ENCODE measurements at regions of chr18 and their contacts with region 1.

Region 1: DNA sequence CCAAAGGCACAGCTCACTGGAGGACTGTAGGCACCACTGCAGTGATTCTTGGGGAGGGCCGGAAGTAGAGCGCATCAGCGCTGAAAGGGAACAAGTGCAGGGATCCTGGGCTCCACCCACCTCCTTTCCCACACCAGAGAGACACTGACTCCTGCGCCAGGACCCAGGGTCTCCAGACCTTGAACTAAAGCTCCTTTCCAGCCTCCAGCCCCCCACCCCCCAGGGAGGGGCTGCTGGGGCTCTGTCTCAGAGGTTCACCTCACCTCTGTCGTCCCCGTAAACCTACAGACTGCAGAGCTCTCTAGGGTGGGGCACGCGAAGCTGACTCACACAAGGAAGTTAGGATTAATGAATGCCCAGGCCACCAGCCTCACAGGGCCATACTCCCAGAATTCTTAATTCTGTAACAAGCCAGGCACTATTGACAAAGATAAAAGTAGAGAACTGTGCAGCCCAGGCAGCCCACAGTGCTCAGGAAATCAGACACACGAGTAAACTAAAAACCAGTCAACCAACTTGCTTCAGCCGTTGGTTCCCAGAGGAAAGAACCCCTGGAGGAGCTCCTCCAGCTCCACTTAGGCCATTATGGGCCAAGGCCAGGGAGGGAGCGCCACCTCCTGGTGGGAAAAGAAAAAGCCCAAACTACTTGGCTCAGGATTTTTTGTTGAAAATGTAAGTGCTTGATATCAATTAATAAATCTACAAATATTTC is 45.1 kb upstream of the ACAA2 start:
- DNase-seq: peak; percentile 75
- ATAC-seq: peak; percentile 85
- H3K4me3 ChIP-seq: no peak overlapping the region
- H3K27ac ChIP-seq: peak overlapping the region; percentile 67
- H3K4me1 ChIP-seq: peaks cover 7% of the 10 kb centered on the region
- H3K27me3 ChIP-seq: no peaks in the 10 kb centered on the region
- CTCF ChIP-seq: peak; percentile 94

Region 2: GRCh38 chr18:49510393-49511115 is 347.9 kb before region 1 on chr18:
- intact Hi-C with region 1: loop called (anchors 5 kb)
- DNase-seq: no peak
- ATAC-seq: peak; percentile 92
- H3K4me3 ChIP-seq: no peak overlapping the region
- H3K27ac ChIP-seq: no peak overlapping the region
- H3K4me1 ChIP-seq: no peaks in the 10 kb centered on the region
- H3K27me3 ChIP-seq: no peaks in the 10 kb centered on the region
- CTCF ChIP-seq: peak; percentile 83

Region 3: DNA sequence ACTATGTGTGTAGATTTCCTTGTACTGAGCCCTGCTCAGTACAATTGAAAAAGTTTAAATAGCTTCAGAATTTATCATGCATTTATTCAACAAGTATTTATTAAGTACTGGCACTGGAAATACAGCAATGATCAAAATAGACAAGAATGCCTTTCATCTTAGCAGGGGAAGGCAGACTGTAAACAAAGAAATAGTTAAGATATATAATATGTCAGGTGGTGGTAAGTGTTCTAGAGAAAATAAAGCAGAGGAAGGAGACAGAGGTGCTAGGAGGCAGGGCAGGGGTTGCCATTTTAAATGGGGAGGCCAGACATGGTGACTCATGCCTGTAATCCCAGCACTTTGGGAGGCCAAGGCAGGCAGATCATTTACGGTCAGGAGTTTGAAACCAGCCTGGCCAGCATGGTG is 310.2 kb before region 1 on chr18:
- intact Hi-C with region 1: no loop called
- DNase-seq: no peak
- ATAC-seq: no peak
- H3K4me3 ChIP-seq: no peak overlapping the region
- H3K27ac ChIP-seq: no peak overlapping the region
- H3K4me1 ChIP-seq: no peaks in the 10 kb centered on the region
- H3K27me3 ChIP-seq: no peaks in the 10 kb centered on the region
- CTCF ChIP-seq: no peak

Region 4: DNA sequence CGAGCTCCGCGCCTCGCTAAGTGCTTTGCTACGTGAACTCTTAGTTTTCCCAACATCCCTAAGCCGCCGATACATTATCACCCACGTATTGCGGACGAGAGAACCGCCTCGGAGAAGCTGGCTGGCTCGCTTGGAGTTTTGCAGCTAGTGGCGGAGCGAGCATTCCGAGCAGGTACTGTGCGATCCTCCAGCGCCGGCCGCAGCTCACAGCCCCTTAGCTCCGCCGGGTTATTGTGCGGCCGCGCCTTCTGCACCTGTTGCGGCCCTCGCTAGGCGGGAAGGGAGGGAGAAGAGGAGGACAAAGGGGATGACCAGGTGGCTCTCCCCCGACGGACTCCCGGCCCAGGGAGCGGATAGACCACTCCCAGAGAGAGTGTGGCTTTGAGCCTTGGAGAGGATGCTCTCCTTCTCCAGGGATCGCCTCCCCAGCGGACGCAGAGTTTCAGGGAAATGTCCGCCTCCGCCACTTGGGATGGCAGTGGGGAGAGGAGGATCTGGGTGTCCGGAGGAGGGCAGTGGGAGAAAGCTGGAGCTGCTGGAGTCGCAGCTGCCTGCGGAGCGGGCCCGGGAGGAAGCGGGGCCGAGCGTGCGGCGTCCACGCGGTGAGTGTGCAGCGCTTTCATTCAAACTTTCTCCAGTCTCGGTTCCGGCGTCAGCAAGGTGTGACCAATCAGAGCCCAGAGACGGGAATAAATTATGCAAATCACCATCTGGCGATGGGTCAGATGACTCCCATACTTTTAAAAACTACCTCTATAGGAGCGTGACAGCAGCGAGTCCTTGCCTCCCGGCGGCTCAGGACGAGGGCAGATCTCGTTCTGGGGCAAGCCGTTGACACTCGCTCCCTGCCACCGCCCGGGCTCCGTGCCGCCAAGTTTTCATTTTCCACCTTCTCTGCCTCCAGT is 296.9 kb before region 1 on chr18 and contains the start of gene LIPG:
- intact Hi-C with region 1: loop called (anchors 5 kb)
- DNase-seq: peak; percentile 69
- ATAC-seq: peak; percentile 83
- H3K4me3 ChIP-seq: peak within 1 kb of the TSS; percentile 50
- H3K27ac ChIP-seq: no peak within 1 kb of the TSS
- H3K4me1 ChIP-seq: peaks cover 23% of the 10 kb centered on the region
- H3K27me3 ChIP-seq: peaks cover 36% of the 10 kb centered on the region
- CTCF ChIP-seq: no peak
- total RNA-seq, gene LIPG: 10.2 TPM

Region 5: GRCh38 chr18:49668574-49669275 is 189.7 kb before region 1 on chr18:
- intact Hi-C with region 1: no loop called
- DNase-seq: no peak
- ATAC-seq: peak; percentile 20
- H3K4me3 ChIP-seq: no peak overlapping the region
- H3K27ac ChIP-seq: no peak overlapping the region
- H3K4me1 ChIP-seq: peaks cover 8% of the 10 kb centered on the region
- H3K27me3 ChIP-seq: no peaks in the 10 kb centered on the region
- CTCF ChIP-seq: no peak

Measured in upper lobe of right lung (tissue), 1 donor.